ENCODE measurements at regions of chr20 and their contacts with region 1.

Region 1: DNA sequence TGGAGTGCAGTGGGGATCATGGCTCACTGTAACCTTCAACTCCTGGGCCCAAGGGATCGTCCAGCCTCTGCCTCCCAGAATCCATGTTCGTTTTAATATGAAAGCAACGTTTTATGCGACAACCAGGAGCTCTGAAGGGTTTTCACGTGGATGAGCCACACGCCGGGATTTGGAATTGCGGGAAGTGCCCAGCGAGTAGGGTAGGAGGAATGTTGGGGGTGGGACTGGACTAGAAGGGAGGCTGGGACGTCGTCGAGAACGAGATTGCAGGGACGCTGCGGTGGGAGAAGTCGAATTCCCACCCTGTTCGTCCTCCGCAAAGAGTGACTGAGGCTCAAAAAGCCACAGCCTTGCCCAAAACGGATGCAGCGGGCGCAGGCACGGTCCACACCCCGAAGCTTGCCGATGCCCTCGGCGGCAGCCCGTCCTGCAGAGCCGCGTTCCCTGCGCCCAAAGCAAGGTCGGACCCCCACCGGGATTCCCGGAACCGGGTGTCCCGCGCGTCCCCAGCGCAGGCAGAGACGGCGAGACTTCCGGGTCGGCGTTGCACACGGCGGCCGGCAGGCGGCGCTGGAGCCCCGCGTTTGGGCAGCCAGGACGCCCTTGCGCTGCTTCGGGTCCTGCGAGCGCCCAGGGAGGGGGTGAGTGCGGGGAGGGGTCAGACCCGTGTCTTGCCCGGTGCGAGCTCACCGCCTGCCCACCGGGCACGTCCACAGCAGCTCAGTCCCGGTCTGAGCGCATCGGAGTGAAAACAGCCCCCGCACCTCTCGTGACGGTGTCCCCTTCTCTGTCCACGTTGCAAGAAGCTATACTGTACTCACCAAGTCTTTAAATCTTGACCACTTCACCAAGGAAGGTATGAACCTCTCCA is 87.8 kb downstream of the DHX35 start:
- DNase-seq: peak; percentile 81
- ATAC-seq: peak; percentile 89
- H3K4me3 Mint-ChIP-seq: peak overlapping the region; percentile 75
- H3K27ac Mint-ChIP-seq: peak overlapping the region; percentile 66
- H3K4me1 Mint-ChIP-seq: peaks cover 14% of the 10 kb centered on the region
- H3K27me3 Mint-ChIP-seq: peaks cover 7% of the 10 kb centered on the region

Region 2: DNA sequence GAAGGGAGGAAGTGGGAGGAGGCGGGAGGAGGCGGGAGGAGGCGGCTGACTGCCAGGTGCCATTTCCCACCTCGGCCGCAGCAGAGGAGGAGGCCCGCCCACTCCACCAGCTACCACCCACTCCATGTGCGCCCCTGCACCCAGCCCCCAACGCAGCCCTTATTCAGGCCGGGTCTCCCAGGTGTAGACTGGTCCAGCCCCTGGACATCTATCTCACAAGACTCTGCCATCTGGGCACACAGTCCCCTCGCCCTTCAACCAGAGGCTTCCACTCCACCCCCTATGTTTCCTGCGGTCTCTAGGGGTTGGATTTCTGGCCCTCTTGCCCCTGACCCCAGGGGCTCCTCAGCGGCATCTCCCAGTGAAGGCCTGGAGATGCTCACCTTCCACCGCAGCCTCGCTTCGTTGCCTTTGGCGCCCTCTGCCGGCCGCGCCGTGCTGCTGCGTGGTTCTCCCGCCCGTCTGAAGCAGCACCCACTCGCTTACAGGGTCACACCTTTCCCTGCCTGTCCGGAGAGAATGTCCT is 156.3 kb before region 1 on chr20:
- CTCF ChIA-PET with region 1: interaction called, 15 read pairs
- DNase-seq: peak; percentile 86
- ATAC-seq: peak; percentile 87
- H3K4me3 Mint-ChIP-seq: peak overlapping the region; percentile 42
- H3K27ac Mint-ChIP-seq: peak overlapping the region; percentile 89
- H3K4me1 Mint-ChIP-seq: peaks cover 68% of the 10 kb centered on the region
- H3K27me3 Mint-ChIP-seq: no peaks in the 10 kb centered on the region

Region 3: DNA sequence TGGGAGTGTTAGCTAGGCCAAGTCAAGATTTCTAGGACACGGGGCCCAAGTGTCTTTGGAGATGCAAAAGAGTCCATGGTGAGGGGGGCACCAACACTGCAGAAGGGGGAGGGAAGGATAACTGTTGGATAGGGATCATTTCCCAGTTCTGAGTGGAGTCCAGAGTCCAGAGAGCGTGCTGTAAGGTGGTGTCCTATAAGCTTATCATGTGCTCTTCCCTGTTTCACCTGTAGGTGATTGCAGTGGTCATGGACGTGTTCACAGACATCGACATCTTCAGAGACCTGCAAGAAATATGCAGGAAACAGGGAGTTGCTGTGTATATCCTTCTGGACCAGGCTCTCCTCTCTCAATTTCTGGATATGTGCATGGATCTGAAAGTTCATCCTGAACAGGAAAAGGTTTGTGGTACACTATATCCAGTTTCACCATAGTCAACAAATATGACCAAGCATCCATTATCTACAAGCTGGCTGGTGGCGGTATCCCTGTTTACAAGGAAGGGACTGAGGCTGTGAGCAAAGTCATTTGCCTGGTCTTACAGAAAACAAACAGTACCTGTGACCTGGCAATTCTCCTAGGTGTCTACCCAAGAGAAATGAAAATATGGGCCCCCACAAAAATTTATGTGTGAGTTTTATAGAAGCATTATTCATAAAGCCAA is 108.1 kb before region 1 on chr20:
- CTCF ChIA-PET with region 1: interaction called, 10 read pairs
- DNase-seq: no peak
- ATAC-seq: no peak
- H3K4me3 Mint-ChIP-seq: no peak overlapping the region
- H3K27ac Mint-ChIP-seq: peak overlapping the region; percentile 8
- H3K4me1 Mint-ChIP-seq: peaks cover 12% of the 10 kb centered on the region
- H3K27me3 Mint-ChIP-seq: no peaks in the 10 kb centered on the region

Region 4: DNA sequence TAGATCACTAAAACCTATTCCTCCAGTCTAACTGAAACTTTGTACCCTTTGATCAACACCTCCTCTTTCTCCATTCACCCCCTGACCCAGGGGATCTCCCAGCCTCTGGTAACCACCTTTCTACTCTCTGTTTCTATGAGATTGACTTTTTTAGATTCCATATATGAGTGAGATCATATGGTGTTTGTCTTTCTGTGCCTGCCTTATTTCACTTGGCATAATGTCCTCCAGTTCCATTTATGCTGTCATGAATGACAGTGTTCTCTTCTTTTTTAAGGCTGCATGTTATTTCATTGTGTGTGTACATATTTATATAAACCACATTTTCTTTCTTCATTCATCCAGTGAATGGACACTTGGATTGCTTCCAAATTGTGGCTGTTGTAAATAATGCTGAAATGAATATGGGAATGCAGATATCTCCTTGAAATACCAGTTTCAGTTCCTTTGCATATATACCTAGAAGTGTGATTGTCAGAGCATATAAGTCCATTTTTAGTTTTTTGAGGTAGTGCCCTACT is 30.1 kb before region 1 on chr20:
- CTCF ChIA-PET with region 1: interaction called, 34 read pairs
- DNase-seq: peak; percentile 58
- ATAC-seq: peak; percentile 29
- H3K4me3 Mint-ChIP-seq: no peak overlapping the region
- H3K27ac Mint-ChIP-seq: peak overlapping the region; percentile 52
- H3K4me1 Mint-ChIP-seq: peaks cover 81% of the 10 kb centered on the region
- H3K27me3 Mint-ChIP-seq: no peaks in the 10 kb centered on the region

Region 5: GRCh38 chr20:39036011-39036410 is 13.9 kb before region 1 on chr20:
- CTCF ChIA-PET with region 1: interaction called, 34 read pairs
- DNase-seq: no peak
- ATAC-seq: no peak
- H3K4me3 Mint-ChIP-seq: no peak overlapping the region
- H3K27ac Mint-ChIP-seq: no peak overlapping the region
- H3K4me1 Mint-ChIP-seq: peaks cover 13% of the 10 kb centered on the region
- H3K27me3 Mint-ChIP-seq: no peaks in the 10 kb centered on the region

Region 6: DNA sequence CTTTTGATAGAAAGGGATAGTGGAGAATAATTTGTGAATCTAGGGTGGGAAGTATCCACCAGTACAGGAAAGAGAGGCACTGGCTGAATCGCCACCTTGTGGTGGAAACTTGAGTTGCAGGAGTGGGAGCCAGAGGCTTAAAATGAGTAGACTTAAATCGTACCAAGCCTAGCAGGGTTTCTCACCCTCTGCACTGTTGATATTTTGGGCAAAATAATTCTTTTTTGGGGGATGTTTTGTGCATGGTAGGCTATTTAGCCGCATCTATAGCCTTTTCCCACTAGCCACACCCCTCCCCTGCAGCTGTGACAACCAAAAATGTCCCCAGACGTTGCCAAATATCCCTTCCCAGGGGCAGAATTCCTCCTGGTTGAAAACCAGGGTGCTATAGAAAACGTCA is 31.3 kb after region 1 on chr20:
- CTCF ChIA-PET with region 1: interaction called, 170 read pairs
- DNase-seq: peak; percentile 87
- ATAC-seq: peak; percentile 86
- H3K4me3 Mint-ChIP-seq: no peak overlapping the region
- H3K27ac Mint-ChIP-seq: no peak overlapping the region
- H3K4me1 Mint-ChIP-seq: peaks cover 8% of the 10 kb centered on the region
- H3K27me3 Mint-ChIP-seq: peaks cover 36% of the 10 kb centered on the region

Measured in activated CD8-positive, alpha-beta memory T cell treated with anti-CD3 and anti-CD28 coated beads, Interleukin-2, amount 10 ng/mL, durations not matched to agents 7 days and 5 days (primary cell).